ENCODE measurements at regions of chr1 and their contacts with region 1.

Region 1: GRCh38 chr1:48033495-48034045 is 36.4 kb upstream of the TRABD2B start:
- DNase-seq: peak; percentile 83

Region 2: DNA sequence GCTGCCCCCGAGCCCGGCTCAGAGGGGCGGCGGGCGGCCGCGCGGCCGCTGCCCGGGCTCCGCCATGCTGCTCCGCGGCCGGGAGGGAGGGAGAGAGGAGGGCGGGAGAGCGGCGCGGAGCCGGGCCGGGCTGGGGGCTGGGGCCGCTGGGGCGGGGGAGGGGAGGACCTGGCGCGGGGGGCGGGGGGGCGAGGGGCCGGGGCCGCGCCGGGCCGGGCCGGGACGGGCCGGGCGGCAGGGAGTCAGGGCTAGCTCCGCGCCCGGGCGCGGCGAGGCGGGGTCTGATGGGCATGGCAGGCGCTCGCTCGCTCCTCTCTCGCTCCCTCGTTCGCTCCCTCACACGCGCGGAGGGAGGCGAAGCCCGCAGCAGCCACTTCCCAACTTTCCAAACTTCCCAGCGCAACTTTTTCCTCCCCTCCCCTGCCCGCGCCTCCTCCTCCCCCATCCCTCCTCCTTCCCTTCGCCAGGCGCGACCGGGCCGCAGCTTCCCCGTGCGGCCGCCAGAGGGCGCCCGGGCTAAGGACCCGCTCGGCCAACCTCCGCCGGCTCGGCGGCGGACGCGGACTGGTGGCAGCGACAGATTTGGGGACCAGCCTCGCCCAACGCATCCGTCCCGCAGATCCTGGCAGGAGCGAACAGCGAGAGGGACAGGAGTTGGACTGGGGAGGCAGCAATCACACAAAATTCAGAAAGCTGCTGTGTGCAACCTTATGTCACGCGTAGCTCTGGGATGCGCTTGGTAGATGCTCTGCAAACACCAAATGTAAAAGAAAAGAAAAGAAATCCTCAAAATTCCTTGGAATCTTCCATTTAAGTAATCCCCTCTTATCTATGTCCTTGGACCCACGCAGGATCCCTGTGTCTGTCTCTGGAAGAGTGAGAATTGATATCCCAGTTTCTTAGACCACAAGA is 36.0 kb before region 1 on chr1 and contains the start of gene TRABD2B:
- intact Hi-C with region 1: no loop called
- DNase-seq: peak; percentile 95
- total RNA-seq, gene TRABD2B: 10.5 to 16.4 TPM

Region 3: GRCh38 chr1:48022306-48022705 is 11.3 kb before region 1 on chr1:
- intact Hi-C with region 1: loop called in 1 of 2 experiments (anchors 1 kb)
- DNase-seq: no peak

Measured in posterior vena cava (tissue), 2 donors.